ENCODE measurements at regions of chr19 and their contacts with region 1.

Region 1: DNA sequence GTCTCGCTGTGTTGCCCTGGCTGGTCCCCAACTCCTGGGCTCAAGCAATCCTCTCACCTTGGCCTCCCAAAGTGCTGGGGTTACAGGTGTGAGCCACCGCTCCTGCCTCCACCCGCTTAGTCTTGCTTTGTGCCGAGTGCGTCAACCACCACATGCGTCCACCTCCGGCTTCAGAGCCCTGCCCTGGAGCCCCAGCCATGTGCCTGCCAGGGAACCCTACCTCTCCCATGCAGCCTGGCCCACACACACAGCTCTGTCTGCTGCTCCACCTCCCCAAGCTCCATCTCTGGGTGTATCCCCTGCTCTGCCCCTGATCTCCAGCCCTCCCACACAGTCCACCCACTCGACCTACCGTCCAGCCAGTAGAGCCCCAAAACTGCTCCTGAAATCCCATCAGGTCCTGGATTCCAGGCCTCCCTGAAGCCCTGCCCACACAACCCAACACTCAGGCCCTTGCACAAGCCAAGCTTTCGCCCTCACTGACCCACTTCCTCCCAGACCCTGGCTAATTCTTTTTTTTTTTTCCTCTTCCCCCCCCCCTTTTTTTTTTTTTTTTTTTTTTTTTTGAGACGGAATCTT is 9.6 kb downstream of the CYP2F1 start:
- DNase-seq: no peak
- H3K4me3 ChIP-seq: no peak overlapping the region
- H3K4me3 Mint-ChIP-seq: peak overlapping the region in 1 of 8 donors; percentile 9
- H3K27ac ChIP-seq: no peak overlapping the region
- H3K27ac Mint-ChIP-seq: peak overlapping the region in 6 of 7 donors; percentile 47 to 94 (median 92)
- H3K4me1 ChIP-seq: peaks cover 33% of the 10 kb centered on the region
- H3K4me1 Mint-ChIP-seq: peaks cover 27 to 54% (median 40%) of the 10 kb centered on the region in 4 donors
- H3K27me3 ChIP-seq: no peaks in the 10 kb centered on the region
- H3K27me3 Mint-ChIP-seq: peaks cover 0 to 4% of the 10 kb centered on the region in 2 donors

Region 2: DNA sequence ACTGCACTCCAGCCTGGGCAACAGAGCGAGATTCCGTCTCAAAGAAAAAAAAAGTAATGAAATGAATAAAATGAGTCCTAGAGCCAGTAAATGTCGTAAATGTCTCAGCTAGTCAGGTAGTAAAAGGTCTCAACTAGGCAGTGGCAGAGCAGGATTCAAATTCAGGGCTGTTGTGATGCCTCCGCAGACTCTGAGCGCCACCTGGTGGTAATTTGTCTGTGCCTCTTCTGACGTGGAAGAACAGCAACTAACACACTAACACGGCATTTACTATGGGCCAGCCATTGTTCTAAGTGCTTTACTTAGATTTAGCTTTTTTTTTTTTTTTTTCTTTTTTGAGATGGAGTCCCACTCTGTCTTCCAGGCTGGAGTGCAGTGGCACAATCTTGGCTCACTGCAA is 20.6 kb after region 1 on chr19:
- CTCF ChIA-PET with region 1: interaction called, 24 read pairs
- POLR2A ChIA-PET with region 1: interaction called, 3 read pairs
- intact Hi-C with region 1: loop called (anchors 1 kb)
- DNase-seq: peak; percentile 85 to 88 (median 86)
- H3K4me3 ChIP-seq: no peak overlapping the region
- H3K4me3 Mint-ChIP-seq: no peak overlapping the region
- H3K27ac ChIP-seq: no peak overlapping the region
- H3K27ac Mint-ChIP-seq: peak overlapping the region in 5 of 7 donors; percentile 39 to 84 (median 81)
- H3K4me1 ChIP-seq: no peaks in the 10 kb centered on the region
- H3K4me1 Mint-ChIP-seq: peaks cover 0 to 2% (median under 1%) of the 10 kb centered on the region in 4 donors
- H3K27me3 ChIP-seq: no peaks in the 10 kb centered on the region
- H3K27me3 Mint-ChIP-seq: peaks cover 6 to 11% of the 10 kb centered on the region in 2 donors

Measured in CD4-positive, alpha-beta memory T cell (primary cell).